Activated T-helper 2 cell treated with anti-CD3 and anti-CD28 coated beads, Interferon-gamma antibody, Interleukin-2, Interleukin-4, amounts not matched to agents 10 μg/mL and 5 μg/mL and 100 μg/mL, durations not matched to agents 14 hours and 24 hours and 36 hours (primary cell): ENCODE measurements at regions of chr3 and their contacts with region 1.

Region 1: DNA sequence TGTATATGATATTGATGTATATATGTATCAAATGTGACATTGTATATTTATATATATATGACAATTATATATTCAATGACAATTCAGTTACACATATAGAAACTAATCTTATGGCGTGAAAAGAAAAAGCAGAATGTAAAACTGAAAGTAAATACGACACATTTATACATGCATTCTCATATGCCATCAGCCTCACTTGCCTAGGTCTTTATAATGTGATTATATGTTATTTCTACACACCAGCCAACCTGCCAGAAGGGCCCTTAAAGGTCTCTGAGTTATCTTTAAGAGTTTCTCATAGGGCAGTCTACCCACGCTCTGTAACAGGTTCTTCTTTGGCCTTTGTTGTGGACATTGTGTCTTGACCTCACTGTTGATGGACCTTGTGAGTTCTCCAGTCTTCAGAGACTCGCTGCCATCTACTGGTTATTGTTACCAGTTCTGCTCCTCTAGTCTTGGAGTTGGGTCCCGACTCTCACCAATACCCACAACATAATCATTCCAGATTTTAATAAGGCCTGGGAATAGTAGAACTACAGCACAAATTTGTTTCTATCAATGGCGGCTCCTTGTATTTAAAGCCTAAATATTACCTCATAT is 371.5 kb upstream of the GOLIM4 start:
- DNase-seq: no peak
- H3K4me3 Mint-ChIP-seq: no peak overlapping the region
- H3K27ac Mint-ChIP-seq: no peak overlapping the region
- H3K4me1 Mint-ChIP-seq: no peaks in the 10 kb centered on the region
- H3K27me3 Mint-ChIP-seq: no peaks in the 10 kb centered on the region

Region 2: DNA sequence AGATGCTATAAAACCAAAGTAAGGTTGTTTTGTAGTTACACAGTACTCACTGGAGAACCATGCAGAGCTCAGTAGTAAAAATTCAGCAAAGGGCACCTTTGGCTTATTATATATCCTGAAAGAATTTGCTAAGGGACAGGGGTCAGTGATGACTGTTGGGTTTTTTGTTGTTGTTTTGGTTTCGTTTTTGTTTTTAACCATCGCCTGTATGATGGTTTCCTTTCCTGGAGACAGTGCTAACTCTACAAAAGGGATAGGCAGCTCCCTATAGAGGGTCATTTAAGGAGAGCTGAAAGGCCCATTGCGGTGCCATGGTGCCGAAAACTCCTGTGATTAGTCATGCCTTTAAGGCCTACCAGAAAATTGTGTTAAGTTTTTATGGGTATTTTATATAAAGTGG is 253.3 kb before region 1 on chr3:
- intact Hi-C with region 1: loop called (anchors 1 kb)
- DNase-seq: no peak
- H3K4me3 Mint-ChIP-seq: no peak overlapping the region
- H3K27ac Mint-ChIP-seq: no peak overlapping the region
- H3K4me1 Mint-ChIP-seq: peaks cover 8% of the 10 kb centered on the region
- H3K27me3 Mint-ChIP-seq: peaks cover 2% of the 10 kb centered on the region